ENCODE measurements at regions of chrX and their contacts with region 1.

Region 1: GRCh38 chrX:154762523-154763289 is at the start of gene DKC1:
- DNase-seq: peak; percentile 97
- ATAC-seq: peak; percentile 90
- H3K4me3 Mint-ChIP-seq: peak within 1 kb of the TSS; percentile 85
- H3K27ac Mint-ChIP-seq: peak within 1 kb of the TSS; percentile 92
- H3K4me1 Mint-ChIP-seq: peaks cover 33% of the 10 kb centered on the region
- H3K27me3 Mint-ChIP-seq: no peaks in the 10 kb centered on the region
- total RNA-seq, gene DKC1: 126 to 130 TPM

Region 2: GRCh38 chrX:154370882-154371770 is 391.6 kb before region 1 on chrX:
- CTCF ChIA-PET with region 1: no interaction called
- POLR2A ChIA-PET with region 1: no interaction called
- intact Hi-C with region 1: no loop called
- DNase-seq: peak; percentile 96
- ATAC-seq: peak; percentile 55
- H3K4me3 Mint-ChIP-seq: peak overlapping the region; percentile 86
- H3K27ac Mint-ChIP-seq: peak overlapping the region; percentile 55
- H3K4me1 Mint-ChIP-seq: peaks cover 22% of the 10 kb centered on the region
- H3K27me3 Mint-ChIP-seq: no peaks in the 10 kb centered on the region

Region 3: GRCh38 chrX:154478728-154479622 is 283.7 kb before region 1 on chrX and contains the start of gene LAGE3:
- CTCF ChIA-PET with region 1: no interaction called
- POLR2A ChIA-PET with region 1: no interaction called
- intact Hi-C with region 1: loop called in 1 of 2 experiments (anchors 2 kb)
- DNase-seq: peak; percentile 97
- ATAC-seq: peak; percentile 96
- H3K4me3 Mint-ChIP-seq: peak within 1 kb of the TSS; percentile 80
- H3K27ac Mint-ChIP-seq: peak within 1 kb of the TSS; percentile 90
- H3K4me1 Mint-ChIP-seq: peaks cover 24% of the 10 kb centered on the region
- H3K27me3 Mint-ChIP-seq: no peaks in the 10 kb centered on the region
- total RNA-seq, gene LAGE3: 34.7 to 43.0 TPM

Region 4: DNA sequence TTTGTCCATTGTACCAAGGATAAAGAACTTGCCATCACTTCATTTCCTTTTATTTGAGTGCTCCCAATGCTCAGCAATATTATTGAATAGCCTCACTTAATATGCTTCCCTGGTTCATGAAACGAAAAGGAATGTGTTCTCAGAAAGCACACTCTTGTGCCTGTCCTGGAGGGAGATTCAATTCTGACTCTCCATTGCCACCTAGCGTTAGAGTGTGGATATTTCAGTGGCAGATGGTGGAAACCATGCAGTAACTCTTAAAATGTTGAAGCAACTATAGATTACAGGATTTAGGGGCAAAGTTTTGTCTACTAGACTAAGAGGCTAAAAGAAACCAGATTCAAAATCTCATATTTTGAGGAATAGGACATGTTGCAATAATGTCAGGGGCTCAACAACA is 47.8 kb before region 1 on chrX:
- CTCF ChIA-PET with region 1: no interaction called
- POLR2A ChIA-PET with region 1: no interaction called
- intact Hi-C with region 1: loop called in 1 of 2 experiments (anchors 2 kb)
- DNase-seq: peak; percentile 52
- ATAC-seq: no peak
- H3K4me3 Mint-ChIP-seq: no peak overlapping the region
- H3K27ac Mint-ChIP-seq: no peak overlapping the region
- H3K4me1 Mint-ChIP-seq: peaks cover 49% of the 10 kb centered on the region
- H3K27me3 Mint-ChIP-seq: no peaks in the 10 kb centered on the region

Region 5: DNA sequence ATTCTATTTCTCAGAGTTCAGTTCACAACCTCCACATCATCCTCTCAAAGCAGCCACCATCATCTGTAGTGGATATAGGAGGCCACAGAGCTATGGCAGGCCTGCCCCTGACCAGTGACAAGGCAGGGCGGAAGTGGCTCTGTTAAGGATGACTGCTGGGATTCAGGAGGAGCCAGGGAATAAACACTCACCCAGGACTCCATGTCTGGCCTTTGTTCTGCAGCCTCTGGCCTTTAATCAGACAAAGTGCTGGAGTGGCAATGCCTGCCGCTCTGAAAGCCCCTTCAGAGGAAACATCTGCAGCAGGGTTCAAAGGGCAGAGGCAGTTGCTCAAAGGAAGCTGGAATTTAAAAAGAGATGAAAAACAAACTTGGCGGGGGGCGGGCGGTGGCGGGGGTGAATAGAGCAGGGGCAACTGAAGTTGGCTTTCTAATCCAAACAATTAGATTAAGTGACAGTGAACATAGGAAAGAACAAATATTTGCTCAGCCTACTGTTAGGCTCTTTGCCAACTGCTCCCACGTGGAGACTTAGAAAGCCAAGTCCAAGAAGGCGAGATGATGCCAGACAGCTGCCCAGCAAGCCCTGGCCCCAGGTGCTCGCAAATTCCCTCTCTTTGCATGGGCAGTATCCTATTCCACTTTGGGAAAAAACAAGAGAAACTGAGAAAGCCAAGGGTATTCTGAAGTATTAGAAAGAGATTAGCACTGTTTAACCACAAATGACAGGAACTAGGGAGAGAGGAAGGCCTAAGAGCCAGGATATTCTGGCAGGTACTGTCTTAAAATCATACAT is 37.0 kb after region 1 on chrX:
- CTCF ChIA-PET with region 1: no interaction called
- POLR2A ChIA-PET with region 1: interaction called, 4 read pairs
- intact Hi-C with region 1: loop called (anchors 1 to 2 kb)
- DNase-seq: no peak
- ATAC-seq: no peak
- H3K4me3 Mint-ChIP-seq: peak overlapping the region; percentile 37
- H3K27ac Mint-ChIP-seq: peak overlapping the region; percentile 90
- H3K4me1 Mint-ChIP-seq: peaks cover 52% of the 10 kb centered on the region
- H3K27me3 Mint-ChIP-seq: no peaks in the 10 kb centered on the region

Region 6: DNA sequence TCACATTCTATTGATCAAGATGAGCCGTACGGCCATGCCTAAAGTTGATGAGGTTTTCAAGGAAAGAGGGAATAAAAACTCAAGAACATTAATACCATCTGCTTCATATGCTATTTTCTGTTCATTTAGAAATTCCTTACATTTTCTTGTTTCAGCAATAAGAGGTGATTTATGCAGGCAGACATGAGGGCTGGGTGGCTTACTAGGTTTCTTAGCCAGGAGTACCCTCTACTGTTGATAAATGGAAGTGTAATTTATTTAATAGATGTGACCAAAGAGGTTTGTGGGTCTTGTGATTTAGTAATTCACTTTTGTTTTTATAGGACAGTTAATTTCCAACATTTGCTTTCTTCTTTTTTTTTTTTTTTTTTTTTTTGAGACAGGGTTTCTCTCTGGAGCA is 78.2 kb after region 1 on chrX:
- CTCF ChIA-PET with region 1: interaction called, 3 read pairs
- POLR2A ChIA-PET with region 1: no interaction called
- intact Hi-C with region 1: loop called in 1 of 2 experiments (anchors 5 kb)
- DNase-seq: peak; percentile 6
- ATAC-seq: peak; percentile 44
- H3K4me3 Mint-ChIP-seq: no peak overlapping the region
- H3K27ac Mint-ChIP-seq: no peak overlapping the region
- H3K4me1 Mint-ChIP-seq: peaks cover under 1% of the 10 kb centered on the region
- H3K27me3 Mint-ChIP-seq: no peaks in the 10 kb centered on the region

Measured in activated CD4-positive, alpha-beta T cell treated with anti-CD3 and anti-CD28 coated beads for 36 hours (primary cell).